Activated CD4-positive, alpha-beta T cell treated with anti-CD3 and anti-CD28 coated beads for 36 hours (primary cell): ENCODE measurements at regions of chr17 and their contacts with region 1.

Region 1: DNA sequence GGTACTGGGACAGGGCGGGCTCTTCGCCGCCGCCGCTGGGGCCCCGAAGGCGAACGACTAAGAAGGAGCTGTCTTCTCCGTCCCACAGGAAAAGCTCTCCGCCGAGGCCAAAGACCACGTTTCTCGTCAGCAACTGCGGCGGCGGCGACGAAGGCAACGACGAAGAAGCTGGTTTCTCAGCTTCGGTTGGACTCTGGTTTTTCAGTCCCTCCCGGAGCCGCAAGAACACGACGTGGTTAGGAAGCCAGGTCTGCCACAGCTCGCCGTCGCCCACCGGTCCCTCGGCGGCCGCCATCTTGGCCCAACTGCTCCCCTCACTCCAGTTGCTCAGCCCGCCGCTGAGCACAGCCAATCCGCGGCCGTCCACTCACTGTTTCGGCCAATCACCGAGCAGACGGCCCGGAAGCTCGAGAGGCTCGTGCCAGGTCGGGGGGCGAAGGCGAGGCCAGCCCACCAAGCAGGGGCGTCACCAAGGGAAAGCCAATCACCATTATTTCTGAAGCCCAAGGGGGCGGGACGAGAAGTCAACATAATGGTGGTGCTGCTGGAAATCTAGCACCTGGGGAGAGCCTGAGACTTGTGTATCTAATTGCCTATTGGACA is at the start of gene NUP88:
- DNase-seq: peak; percentile 98
- ATAC-seq: peak; percentile 95
- H3K4me3 Mint-ChIP-seq: peak within 1 kb of the TSS; percentile 98
- H3K27ac Mint-ChIP-seq: peak within 1 kb of the TSS; percentile 100
- H3K4me1 Mint-ChIP-seq: peaks cover 41% of the 10 kb centered on the region
- H3K27me3 Mint-ChIP-seq: no peaks in the 10 kb centered on the region
- total RNA-seq, gene NUP88: 135 to 199 TPM

Region 2: GRCh38 chr17:4709794-4710692 is 709.4 kb before region 1 on chr17 and contains the start of gene ARRB2:
- CTCF ChIA-PET with region 1: no interaction called
- POLR2A ChIA-PET with region 1: interaction called, 3 read pairs
- intact Hi-C with region 1: loop called in 1 of 2 experiments (anchors 1 kb)
- DNase-seq: peak; percentile 99
- ATAC-seq: peak; percentile 83
- H3K4me3 Mint-ChIP-seq: peak within 1 kb of the TSS; percentile 82
- H3K27ac Mint-ChIP-seq: peak within 1 kb of the TSS; percentile 90
- H3K4me1 Mint-ChIP-seq: peaks cover 52% of the 10 kb centered on the region
- H3K27me3 Mint-ChIP-seq: no peaks in the 10 kb centered on the region
- total RNA-seq, gene ARRB2: 168 to 175 TPM

Region 3: GRCh38 chr17:4997302-4998026 is 422.0 kb before region 1 on chr17 and contains the starts of genes INCA1 and KIF1C:
- CTCF ChIA-PET with region 1: no interaction called
- POLR2A ChIA-PET with region 1: no interaction called
- intact Hi-C with region 1: loop called in 1 of 2 experiments (anchors 1 kb)
- DNase-seq: peak; percentile 96
- ATAC-seq: peak; percentile 95
- H3K4me3 Mint-ChIP-seq: peak within 1 kb of the TSS; percentile 80
- H3K27ac Mint-ChIP-seq: peak within 1 kb of the TSS; percentile 55
- H3K4me1 Mint-ChIP-seq: peaks cover 20% of the 10 kb centered on the region
- H3K27me3 Mint-ChIP-seq: no peaks in the 10 kb centered on the region
- total RNA-seq, gene INCA1: 0.18 to 0.28 TPM
- total RNA-seq, gene KIF1C: 32.6 to 43.0 TPM

Region 4: DNA sequence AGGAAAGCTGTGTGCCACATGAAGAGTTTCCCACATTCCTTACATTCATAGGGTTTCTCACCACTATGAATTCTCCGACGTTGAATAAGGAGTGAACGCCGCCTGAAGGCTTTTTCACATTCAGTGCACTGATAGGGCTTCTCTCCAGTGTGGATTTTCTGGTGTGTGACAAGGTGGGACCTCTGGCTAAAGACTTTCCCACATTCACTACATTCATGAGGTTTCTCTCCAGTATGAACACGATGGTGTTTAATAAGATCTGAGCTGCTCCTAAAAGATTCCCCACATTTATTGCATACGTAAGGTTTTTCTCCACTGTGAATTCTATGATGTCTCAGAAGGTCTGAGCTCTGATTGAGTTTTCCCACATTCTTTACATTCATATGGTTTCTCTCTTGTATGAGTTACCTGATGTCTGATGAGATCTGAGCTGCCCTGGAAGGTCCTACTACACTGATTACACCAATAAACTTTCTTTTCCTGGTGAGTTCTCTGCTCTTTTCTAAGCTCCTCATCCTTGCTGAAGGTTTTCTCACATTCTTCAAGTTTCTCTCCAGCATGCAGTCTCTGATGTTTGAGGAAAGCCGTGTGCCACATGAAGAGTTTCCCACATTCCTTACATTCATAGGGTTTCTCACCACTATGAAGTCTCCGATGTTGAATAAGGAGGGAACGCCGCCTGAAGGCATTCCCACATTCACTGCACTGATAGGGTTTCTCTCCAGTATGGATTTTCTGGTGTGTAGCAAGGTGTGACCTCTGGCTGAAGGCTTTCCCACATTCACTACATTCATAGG is 237.8 kb before region 1 on chr17:
- CTCF ChIA-PET with region 1: no interaction called
- POLR2A ChIA-PET with region 1: no interaction called
- intact Hi-C with region 1: no loop called
- DNase-seq: no peak
- ATAC-seq: no peak
- H3K4me3 Mint-ChIP-seq: peak overlapping the region; percentile 5
- H3K27ac Mint-ChIP-seq: no peak overlapping the region
- H3K4me1 Mint-ChIP-seq: no peaks in the 10 kb centered on the region
- H3K27me3 Mint-ChIP-seq: no peaks in the 10 kb centered on the region

Region 5: GRCh38 chr17:5249615-5250014 is 169.8 kb before region 1 on chr17:
- CTCF ChIA-PET with region 1: no interaction called
- POLR2A ChIA-PET with region 1: no interaction called
- intact Hi-C with region 1: loop called in 1 of 2 experiments (anchors 5 kb)
- DNase-seq: peak; percentile 80
- ATAC-seq: peak; percentile 91
- H3K4me3 Mint-ChIP-seq: no peak overlapping the region
- H3K27ac Mint-ChIP-seq: no peak overlapping the region
- H3K4me1 Mint-ChIP-seq: peaks cover 8% of the 10 kb centered on the region
- H3K27me3 Mint-ChIP-seq: no peaks in the 10 kb centered on the region

Region 6: GRCh38 chr17:5468075-5468473 is 48.6 kb after region 1 on chr17:
- CTCF ChIA-PET with region 1: no interaction called
- POLR2A ChIA-PET with region 1: interaction called, 4 read pairs
- intact Hi-C with region 1: loop called (anchors 1 kb)
- DNase-seq: peak; percentile 35
- ATAC-seq: peak; percentile 14
- H3K4me3 Mint-ChIP-seq: peak overlapping the region; percentile 90
- H3K27ac Mint-ChIP-seq: peak overlapping the region; percentile 75
- H3K4me1 Mint-ChIP-seq: peaks cover 38% of the 10 kb centered on the region
- H3K27me3 Mint-ChIP-seq: no peaks in the 10 kb centered on the region

Region 7: GRCh38 chr17:6640536-6641373 is 1221.3 kb after region 1 on chr17 and contains the starts of genes KIAA0753 and TXNDC17:
- CTCF ChIA-PET with region 1: no interaction called
- POLR2A ChIA-PET with region 1: no interaction called
- intact Hi-C with region 1: loop called in 1 of 2 experiments (anchors 10 kb)
- DNase-seq: peak; percentile 96
- ATAC-seq: peak; percentile 81
- H3K4me3 Mint-ChIP-seq: peak within 1 kb of the TSS; percentile 92
- H3K27ac Mint-ChIP-seq: peak within 1 kb of the TSS; percentile 92
- H3K4me1 Mint-ChIP-seq: peaks cover 59% of the 10 kb centered on the region
- H3K27me3 Mint-ChIP-seq: no peaks in the 10 kb centered on the region
- total RNA-seq, gene KIAA0753: 17.1 to 24.9 TPM
- total RNA-seq, gene TXNDC17: 52.4 to 122 TPM